Activated T-helper 2 cell treated with anti-CD3 and anti-CD28 coated beads, Interferon-gamma antibody, Interleukin-2, Interleukin-4, amounts not matched to agents 10 μg/mL and 5 μg/mL and 100 μg/mL, durations not matched to agents 14 hours and 24 hours and 36 hours (primary cell): ENCODE measurements at regions of chr18 and their contacts with region 1.

Region 1: GRCh38 chr18:22933206-22933957 is at the start of gene RBBP8:
- DNase-seq: peak; percentile 84
- H3K4me3 Mint-ChIP-seq: peak within 1 kb of the TSS; percentile 97
- H3K27ac Mint-ChIP-seq: peak within 1 kb of the TSS; percentile 93
- H3K4me1 Mint-ChIP-seq: peaks cover 39% of the 10 kb centered on the region
- H3K27me3 Mint-ChIP-seq: no peaks in the 10 kb centered on the region
- total RNA-seq, gene RBBP8: 92.8 and 94.5 TPM in 2 replicates

Region 2: GRCh38 chr18:22800551-22800951 is 132.8 kb before region 1 on chr18:
- intact Hi-C with region 1: loop called (anchors 5 kb)
- DNase-seq: no peak
- H3K4me3 Mint-ChIP-seq: no peak overlapping the region
- H3K27ac Mint-ChIP-seq: no peak overlapping the region
- H3K4me1 Mint-ChIP-seq: no peaks in the 10 kb centered on the region
- H3K27me3 Mint-ChIP-seq: peaks cover 11% of the 10 kb centered on the region

Region 3: GRCh38 chr18:22913857-22914256 is 19.5 kb before region 1 on chr18:
- intact Hi-C with region 1: no loop called
- DNase-seq: no peak
- H3K4me3 Mint-ChIP-seq: no peak overlapping the region
- H3K27ac Mint-ChIP-seq: no peak overlapping the region
- H3K4me1 Mint-ChIP-seq: no peaks in the 10 kb centered on the region
- H3K27me3 Mint-ChIP-seq: peaks cover 12% of the 10 kb centered on the region

Region 4: DNA sequence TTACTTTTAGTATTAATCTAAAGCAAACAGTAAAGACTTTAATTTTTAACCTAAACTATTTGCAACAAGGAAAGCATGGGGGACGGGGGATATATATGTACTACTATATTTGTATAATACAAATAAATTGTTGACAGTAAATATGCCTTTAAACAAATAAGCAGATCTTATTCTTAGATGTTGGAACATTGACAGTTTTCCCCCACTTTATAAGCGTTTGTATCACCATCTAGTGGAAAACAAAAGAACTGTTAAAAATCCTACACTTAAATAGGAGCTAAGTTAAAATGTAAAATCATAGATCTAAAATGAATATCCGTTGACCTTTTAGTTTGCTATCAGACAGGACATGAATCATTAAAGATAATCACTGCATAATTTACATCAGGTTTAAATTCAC is 49.8 kb after region 1 on chr18:
- intact Hi-C with region 1: loop called (anchors 1 kb)
- DNase-seq: no peak
- H3K4me3 Mint-ChIP-seq: no peak overlapping the region
- H3K27ac Mint-ChIP-seq: no peak overlapping the region
- H3K4me1 Mint-ChIP-seq: peaks cover 15% of the 10 kb centered on the region
- H3K27me3 Mint-ChIP-seq: no peaks in the 10 kb centered on the region

Region 5: GRCh38 chr18:23231340-23232021 is 298.1 kb after region 1 on chr18:
- intact Hi-C with region 1: loop called (anchors 10 kb)
- DNase-seq: peak; percentile 83
- H3K4me3 Mint-ChIP-seq: peak overlapping the region; percentile 69
- H3K27ac Mint-ChIP-seq: peak overlapping the region; percentile 98
- H3K4me1 Mint-ChIP-seq: peaks cover 70% of the 10 kb centered on the region
- H3K27me3 Mint-ChIP-seq: no peaks in the 10 kb centered on the region

Region 6: GRCh38 chr18:23412351-23412964 is 479.1 kb after region 1 on chr18:
- intact Hi-C with region 1: loop called (anchors 5 kb)
- DNase-seq: no peak
- H3K4me3 Mint-ChIP-seq: no peak overlapping the region
- H3K27ac Mint-ChIP-seq: no peak overlapping the region
- H3K4me1 Mint-ChIP-seq: no peaks in the 10 kb centered on the region
- H3K27me3 Mint-ChIP-seq: no peaks in the 10 kb centered on the region

Region 7: DNA sequence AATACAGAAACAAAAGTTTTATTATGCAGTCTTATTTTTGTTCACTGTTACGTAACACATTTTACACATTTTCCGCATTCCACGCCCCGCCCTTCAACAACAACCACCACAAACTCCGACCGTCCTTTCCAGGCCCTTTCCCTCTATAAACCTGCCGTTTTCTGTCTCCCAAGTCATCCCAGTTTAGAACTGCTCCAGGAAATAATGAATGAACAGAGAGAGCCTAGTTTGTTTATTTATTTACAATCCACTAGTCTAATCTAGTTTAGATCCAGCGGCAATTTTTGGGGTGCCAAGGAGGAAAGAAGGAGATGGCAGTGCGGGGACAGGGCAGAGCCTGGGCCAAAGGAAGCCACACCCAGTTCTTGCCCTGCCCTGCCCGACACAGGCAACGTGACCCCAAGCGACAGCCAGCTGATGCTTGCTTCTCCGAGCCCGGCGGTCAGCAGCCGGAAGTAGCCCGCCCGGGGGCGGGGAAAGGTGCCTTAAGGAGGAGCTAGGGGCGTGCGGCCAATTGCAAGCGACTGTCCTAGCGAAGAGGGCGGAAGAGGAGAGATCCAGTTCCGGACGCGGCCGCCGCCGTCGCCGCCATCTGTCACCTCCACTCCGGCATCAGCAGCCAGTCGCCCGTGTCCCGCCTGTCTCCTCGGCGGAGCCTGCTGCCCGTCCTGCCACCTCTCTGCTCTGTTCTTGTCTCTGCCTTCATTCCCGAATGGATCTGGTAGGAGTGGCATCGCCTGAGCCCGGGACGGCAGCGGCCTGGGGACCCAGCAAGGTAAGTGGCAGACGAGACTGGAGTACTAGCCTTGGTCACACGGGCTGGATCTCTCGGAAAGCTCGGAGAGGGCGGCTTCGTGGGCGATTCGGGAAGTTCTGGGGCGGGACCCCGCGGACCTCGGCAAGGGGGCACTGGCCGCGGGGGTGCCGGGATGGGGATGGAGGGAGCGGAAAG is 519.6 kb after region 1 on chr18 and contains the start of gene RIOK3:
- intact Hi-C with region 1: loop called (anchors 10 kb)
- DNase-seq: peak; percentile 92
- H3K4me3 Mint-ChIP-seq: peak within 1 kb of the TSS; percentile 92
- H3K27ac Mint-ChIP-seq: peak within 1 kb of the TSS; percentile 88
- H3K4me1 Mint-ChIP-seq: peaks cover 35% of the 10 kb centered on the region
- H3K27me3 Mint-ChIP-seq: peaks cover 6% of the 10 kb centered on the region
- total RNA-seq, gene RIOK3: 53.4 and 55.4 TPM in 2 replicates

Region 8: DNA sequence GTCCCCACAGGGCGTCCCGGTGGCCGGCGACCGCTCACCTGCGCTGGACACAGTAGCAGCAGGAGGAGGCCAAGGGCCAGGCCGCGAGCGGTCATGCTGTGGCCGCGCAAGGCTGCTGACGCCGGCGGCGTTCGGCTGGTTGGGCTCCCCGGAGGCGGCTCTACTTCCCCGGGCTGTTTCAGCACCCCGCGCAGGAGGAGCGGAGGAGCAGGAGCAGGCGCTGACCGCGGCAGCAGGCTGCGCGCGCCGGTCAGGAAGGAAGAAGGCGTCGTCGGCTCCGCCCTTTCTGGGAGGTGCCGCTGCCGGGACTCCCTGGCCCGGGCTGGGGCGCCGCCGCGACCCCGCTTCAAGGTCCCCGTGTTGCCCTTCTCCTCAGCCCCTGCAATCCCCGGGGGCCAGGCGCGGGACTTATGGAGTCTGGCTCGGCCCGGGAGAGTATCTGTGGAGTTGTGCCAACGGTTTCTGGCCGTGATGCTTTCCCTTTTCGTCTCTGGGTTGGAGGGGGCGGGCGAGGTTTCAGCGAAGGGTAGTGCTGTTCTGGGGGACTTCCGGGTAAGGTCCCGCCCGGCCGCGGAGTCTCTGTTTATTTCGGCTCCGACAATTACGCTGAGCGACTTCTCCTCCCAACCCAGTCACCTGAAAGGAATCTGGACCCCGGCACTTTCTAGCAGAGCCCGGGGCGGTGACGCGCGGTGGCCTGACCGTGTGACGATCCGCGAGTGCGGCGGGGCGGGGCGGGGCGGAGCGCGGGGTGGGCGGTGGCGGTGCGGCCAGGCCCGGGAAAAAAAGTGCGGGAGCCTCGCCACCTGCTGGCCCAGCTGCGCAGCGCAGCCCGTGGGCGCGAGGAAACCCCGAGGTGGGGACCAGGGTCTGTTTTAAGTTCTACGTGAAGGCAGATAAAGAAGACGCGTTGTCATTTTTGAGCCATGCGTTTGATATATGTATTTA is 653.1 kb after region 1 on chr18 and contains the start of gene NPC1:
- intact Hi-C with region 1: loop called (anchors 1 kb)
- DNase-seq: peak; percentile 92
- H3K4me3 Mint-ChIP-seq: peak within 1 kb of the TSS; percentile 92
- H3K27ac Mint-ChIP-seq: peak within 1 kb of the TSS; percentile 94
- H3K4me1 Mint-ChIP-seq: peaks cover 39% of the 10 kb centered on the region
- H3K27me3 Mint-ChIP-seq: peaks cover 5% of the 10 kb centered on the region
- total RNA-seq, gene NPC1: 29.0 and 31.4 TPM in 2 replicates